WTC11 (cell line): ENCODE measurements at regions of chr11 and their contacts with region 1.

Region 1: DNA sequence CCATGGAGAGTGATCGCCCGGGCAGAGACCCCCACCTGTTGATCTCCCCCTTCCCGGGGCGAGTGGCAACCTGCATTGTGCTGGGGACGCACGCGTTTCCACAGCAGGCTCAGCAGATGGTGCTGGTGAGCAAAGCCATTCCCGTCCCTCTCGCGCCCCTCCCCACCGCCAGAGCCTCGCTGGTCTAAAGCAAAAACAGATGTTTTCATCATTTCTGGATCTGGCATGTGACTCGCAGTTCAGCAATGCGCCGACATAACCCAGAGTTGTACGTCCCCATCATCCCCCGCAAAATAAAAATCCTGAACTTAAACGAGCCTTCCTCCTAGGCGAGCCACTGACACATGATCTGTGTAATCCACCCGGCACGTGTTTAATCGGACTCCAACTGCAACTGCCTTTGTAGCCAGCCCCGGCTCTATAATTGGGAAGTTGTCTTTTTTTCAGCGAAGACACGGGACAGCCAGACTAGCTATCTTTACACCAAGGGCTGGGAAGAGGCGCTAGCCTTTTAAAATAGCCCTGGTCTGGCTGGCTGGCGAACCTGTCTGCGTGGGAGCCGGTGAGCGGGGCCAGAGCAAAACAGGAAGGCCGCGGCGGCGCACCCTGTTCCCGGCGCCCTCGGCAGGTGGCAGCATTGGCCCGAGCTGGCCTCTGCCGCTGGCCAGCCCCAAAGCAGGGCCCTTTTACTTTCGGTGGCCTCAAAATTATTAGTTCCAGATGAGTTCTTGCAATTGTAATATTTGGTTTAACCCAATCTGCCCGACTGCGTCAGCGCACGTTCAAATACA is 203.0 kb upstream of the SORL1-AS1 start:
- DNase-seq: peak; percentile 83
- ATAC-seq: peak; percentile 82
- H3K4me3 Mint-ChIP-seq: peak overlapping the region; percentile 73
- H3K27ac Mint-ChIP-seq: peak overlapping the region; percentile 54
- H3K4me1 Mint-ChIP-seq: peaks cover 46% of the 10 kb centered on the region
- H3K27me3 Mint-ChIP-seq: peaks cover 8% of the 10 kb centered on the region; the same call in 1 of the 2 replicates
- CTCF ChIP-seq: peak; percentile 64

Region 2: DNA sequence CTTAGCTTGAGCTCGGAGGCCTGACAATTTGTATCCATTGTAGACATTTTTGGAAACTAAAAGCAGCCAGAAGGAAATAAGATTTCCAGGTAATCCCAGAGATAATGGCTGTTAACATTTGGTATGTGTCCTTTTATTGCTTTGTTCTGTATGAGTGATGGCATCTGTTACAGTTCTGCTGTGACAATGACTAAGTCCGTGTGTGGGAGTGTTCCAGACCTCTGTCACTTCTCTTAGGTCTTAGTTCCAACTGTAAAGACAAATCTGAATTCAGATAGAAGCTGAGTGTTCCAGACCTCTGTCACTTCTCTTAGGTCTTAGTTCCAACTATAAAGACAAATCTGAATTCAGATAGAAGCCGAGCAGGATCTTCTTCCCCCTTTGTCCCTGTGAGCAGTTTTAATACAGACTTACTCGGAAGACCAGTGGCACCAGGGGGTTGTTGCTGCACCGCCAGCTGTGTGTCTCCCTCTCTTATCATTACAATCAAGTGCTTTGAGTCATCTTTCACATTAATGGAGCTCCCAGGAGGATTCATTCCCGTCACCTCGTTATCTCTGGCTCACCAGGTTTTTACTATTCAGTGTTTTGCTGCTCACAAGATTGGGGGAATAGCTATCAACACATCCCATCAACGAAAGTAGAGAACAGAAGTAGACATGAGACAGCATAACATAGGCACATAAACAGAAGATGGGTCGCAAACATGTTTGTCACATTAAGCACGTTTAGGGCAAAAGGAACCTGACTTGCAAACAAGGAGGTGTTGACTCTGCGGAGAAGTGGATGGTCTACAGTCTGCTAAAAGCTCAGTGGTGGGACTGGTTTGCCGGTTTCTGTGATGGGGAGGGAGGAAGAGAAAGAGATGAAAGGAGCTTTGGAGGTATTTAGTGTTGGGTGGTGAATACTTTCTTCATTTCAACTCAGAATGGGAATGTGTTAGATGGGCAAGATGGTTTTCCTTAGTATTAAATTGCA is 11.9 kb before region 1 on chr11:
- CTCF ChIA-PET with region 1: interaction called, 17 read pairs
- POLR2A ChIA-PET with region 1: no interaction called
- DNase-seq: no peak
- ATAC-seq: peak; percentile 67
- H3K4me3 Mint-ChIP-seq: no peak overlapping the region
- H3K27ac Mint-ChIP-seq: peak overlapping the region; percentile 79
- H3K4me1 Mint-ChIP-seq: peaks cover 34% of the 10 kb centered on the region; the same call in 1 of the 2 replicates
- H3K27me3 Mint-ChIP-seq: no peaks in the 10 kb centered on the region
- CTCF ChIP-seq: no peak

Region 3: DNA sequence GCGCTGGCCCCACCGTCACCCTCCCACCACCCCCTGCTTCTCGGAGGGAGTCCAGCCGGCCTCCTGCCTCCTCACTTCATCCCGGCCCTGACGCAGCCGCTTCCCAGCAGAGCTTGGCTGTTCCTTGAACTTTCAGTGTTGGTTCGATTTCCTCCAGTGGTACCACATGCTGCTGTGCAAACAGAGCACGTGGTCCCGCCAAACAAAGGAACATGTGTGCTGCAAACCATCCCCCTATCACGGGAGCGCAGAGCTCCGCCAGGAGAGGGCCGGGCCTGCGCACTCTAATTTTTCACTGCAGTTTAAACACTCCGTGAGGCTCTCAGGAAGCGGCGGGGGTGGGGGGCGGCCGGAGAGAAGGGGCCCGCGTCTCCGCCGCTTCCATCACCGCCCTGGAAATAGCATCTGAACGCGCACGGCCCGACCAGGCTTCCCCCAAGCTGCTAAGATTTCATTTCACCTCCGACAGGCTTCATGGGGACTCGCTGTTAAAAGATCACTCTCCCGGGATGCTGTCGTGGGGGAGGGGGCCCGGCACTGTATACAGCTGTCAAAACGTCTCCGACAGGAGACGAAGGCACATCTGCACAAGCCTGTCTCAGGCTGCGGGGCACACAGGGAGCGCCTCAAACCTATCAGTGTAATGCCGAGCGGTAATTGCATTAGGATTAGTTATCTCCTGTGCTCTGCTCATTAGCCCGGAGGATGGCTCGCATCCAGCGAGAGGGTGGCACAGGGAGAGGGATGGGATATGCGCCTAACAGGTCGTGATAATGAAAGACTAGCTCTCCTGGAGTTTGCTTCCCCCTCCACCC is 66.9 kb after region 1 on chr11:
- CTCF ChIA-PET with region 1: interaction called, 16 read pairs
- POLR2A ChIA-PET with region 1: no interaction called
- DNase-seq: peak; percentile 63
- ATAC-seq: peak; percentile 83
- H3K4me3 Mint-ChIP-seq: peak overlapping the region; percentile 70
- H3K27ac Mint-ChIP-seq: no peak overlapping the region
- H3K4me1 Mint-ChIP-seq: peaks cover 15% of the 10 kb centered on the region
- H3K27me3 Mint-ChIP-seq: peaks cover 34% of the 10 kb centered on the region
- CTCF ChIP-seq: no peak

Region 4: GRCh38 chr11:122101625-122102291 is 446.0 kb after region 1 on chr11:
- CTCF ChIA-PET with region 1: interaction called, 99 read pairs
- POLR2A ChIA-PET with region 1: interaction called, 4 read pairs
- DNase-seq: peak; percentile 60
- ATAC-seq: peak; percentile 80
- H3K4me3 Mint-ChIP-seq: no peak overlapping the region
- H3K27ac Mint-ChIP-seq: no peak overlapping the region
- H3K4me1 Mint-ChIP-seq: peaks cover 36% of the 10 kb centered on the region
- H3K27me3 Mint-ChIP-seq: peaks cover 21% of the 10 kb centered on the region
- CTCF ChIP-seq: 0 out of 2 replicates have a peak, but pooled peaks have one; percentile 23

Region 5: DNA sequence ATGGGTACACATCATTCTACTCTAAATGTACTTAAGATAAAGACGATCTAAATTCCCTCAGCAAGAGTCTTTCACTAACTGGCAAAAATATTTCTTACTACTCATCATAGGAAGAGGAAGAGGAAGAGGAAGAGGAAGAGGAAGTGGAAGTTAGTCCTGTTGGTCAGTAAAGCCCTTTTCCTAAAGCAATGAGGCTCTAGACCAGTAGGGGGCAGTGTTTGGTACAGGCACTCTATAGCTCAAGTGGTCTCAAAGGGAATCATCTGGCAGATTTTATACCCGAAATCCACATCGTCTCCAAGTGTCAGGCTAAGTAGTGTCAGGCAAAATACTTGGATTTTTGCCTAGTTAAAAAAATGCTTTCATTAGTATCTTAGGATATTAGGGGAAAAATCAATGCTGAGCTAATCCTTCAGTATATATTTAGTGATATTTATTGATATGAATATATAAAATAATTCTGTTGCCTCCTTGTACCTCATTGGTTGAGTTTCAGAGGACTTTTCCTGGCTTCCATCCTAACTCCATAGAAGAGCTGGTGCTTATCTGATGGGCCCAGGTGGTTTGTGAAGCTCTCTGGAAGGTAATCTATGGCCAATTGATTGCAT is 452.6 kb after region 1 on chr11:
- CTCF ChIA-PET with region 1: interaction called, 99 read pairs
- POLR2A ChIA-PET with region 1: no interaction called
- DNase-seq: peak; percentile 58
- ATAC-seq: peak; percentile 61; the same call in 1 of the 2 replicates
- H3K4me3 Mint-ChIP-seq: no peak overlapping the region
- H3K27ac Mint-ChIP-seq: no peak overlapping the region
- H3K4me1 Mint-ChIP-seq: peaks cover 11% of the 10 kb centered on the region
- H3K27me3 Mint-ChIP-seq: no peaks in the 10 kb centered on the region
- CTCF ChIP-seq: peak; percentile 70

Region 6: DNA sequence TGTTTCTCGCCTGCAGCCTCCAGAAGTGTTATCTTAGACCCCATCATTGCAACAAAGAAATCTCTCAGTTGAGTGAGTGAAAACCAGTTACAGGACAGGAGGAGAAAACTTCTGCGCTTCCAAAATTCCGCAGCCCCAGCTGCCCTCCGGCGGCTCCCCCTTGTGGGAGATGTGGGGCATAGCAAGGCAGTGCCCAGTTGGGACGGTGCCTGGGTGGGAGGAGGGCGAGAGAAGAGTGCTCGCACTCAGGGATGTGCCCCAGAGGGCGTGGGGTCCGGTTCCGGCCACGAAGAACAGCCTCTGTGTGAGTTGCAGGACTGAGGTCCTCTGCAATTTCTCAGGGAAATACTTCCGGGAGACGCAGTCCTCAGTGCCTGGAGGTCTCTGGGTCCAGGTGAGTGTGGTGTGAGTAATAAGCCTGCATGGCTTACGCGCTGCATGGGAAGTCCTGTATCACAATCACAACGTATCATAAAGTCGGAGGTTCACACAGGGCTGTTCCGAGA is 547.3 kb after region 1 on chr11:
- CTCF ChIA-PET with region 1: interaction called, 31 read pairs
- POLR2A ChIA-PET with region 1: no interaction called
- DNase-seq: peak; percentile 84
- ATAC-seq: peak; percentile 97
- H3K4me3 Mint-ChIP-seq: peak overlapping the region; percentile 39
- H3K27ac Mint-ChIP-seq: no peak overlapping the region
- H3K4me1 Mint-ChIP-seq: peaks cover 6% of the 10 kb centered on the region
- H3K27me3 Mint-ChIP-seq: no peaks in the 10 kb centered on the region
- CTCF ChIP-seq: peak; percentile 89

Region 7: DNA sequence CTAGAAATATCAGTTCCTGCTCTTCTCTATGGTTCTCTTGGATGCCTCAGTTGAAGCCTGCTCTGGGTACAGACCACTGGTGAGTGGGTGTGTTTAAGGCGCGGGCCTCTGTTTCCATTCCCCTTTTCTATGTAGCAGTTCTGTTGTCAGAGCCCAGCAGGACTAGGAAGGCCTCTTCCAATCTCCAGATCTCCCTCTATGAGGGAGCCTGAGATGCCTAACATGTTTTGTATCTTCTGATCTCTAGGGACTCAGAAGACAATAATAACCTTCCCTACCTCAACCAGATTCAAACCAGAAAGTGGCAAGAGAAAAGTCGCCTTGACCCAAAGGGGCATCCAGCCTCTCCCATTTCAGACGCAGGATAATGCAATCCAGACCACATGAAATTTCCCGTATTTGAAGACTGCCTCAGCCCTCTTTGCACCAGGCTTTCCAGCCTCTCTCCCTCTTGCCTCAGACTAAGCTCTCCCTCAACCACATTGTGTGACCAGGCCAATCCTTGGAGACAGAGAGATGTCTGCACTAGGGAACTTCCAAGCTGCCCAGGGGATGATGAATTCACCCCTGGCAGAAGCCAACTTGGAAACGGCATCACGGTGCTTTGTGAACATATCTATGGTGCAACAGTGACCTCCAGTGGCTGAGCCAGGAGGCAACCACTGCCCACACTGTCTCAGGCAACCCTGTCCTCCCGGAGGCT is 849.7 kb after region 1 on chr11:
- CTCF ChIA-PET with region 1: interaction called, 17 read pairs
- POLR2A ChIA-PET with region 1: no interaction called
- DNase-seq: peak; percentile 82
- ATAC-seq: peak; percentile 96
- H3K4me3 Mint-ChIP-seq: no peak overlapping the region
- H3K27ac Mint-ChIP-seq: no peak overlapping the region
- H3K4me1 Mint-ChIP-seq: peaks cover 5% of the 10 kb centered on the region
- H3K27me3 Mint-ChIP-seq: no peaks in the 10 kb centered on the region
- CTCF ChIP-seq: peak; percentile 65